ENCODE measurements at regions of chr7 and their contacts with region 1.

Region 1: DNA sequence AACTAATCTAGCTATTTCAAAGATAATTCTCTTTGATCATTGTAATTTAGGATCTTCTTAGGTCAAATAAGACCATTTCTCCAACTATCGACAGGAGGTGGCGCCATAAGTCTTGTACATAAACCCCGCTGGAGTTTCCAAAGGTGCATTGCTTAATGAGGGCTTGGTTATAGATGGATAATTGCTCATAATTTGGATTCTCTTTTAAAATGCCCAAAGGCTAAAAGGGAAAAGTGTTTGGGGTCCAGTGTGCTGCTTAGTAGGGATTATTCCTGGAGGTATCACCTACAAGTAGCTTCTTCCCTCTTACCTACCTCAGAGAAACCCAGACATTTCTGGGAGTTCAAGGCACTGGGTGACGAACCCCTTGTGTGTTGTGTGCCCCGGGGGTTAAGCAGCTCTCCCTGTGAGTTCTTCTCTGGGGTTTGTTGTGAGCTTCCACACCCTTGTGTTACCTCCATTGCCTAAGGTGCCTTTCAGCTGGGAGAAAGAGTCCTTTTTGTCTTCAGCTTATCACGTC is 75.2 kb downstream of the PAXIP1 start:
- DNase-seq: peak in 3 of 4 donors; percentile 69 to 88 (median 71)
- ATAC-seq: peak; percentile 91
- H3K4me3 ChIP-seq: peak overlapping the region; percentile 61 to 64
- H3K27ac ChIP-seq: peak overlapping the region; percentile 85 to 91
- H3K4me1 ChIP-seq: peaks cover 4 to 8% of the 10 kb centered on the region in 2 donors
- H3K27me3 ChIP-seq: no peaks in the 10 kb centered on the region
- CTCF ChIP-seq: peak; percentile 55 to 62

Region 2: DNA sequence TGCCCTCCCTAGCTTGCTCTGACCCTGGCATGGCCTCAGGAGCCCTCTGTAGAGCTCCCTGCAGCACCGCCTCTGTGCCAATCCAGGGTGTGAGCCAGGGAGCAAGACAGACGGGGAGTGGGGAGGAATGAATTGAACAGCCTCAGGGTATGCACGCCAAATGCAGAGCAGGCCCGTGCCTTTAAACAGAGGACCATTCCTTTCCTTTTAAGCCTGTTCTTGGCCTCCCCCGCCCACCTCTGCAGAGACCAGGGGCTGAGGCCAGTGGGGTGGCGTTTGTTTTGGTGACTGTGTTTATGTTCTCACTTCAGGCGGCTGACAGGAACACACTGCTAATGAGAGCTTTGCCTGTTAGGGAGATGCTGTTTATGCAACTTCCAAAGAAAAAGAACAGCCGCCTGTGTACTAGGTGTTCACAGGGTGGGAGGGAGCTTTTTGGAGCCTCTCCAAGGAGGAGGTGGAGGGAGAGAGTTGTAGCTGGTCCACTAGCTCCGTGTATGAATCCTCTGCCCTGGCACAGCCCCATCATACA is 1403.5 kb before region 1 on chr7:
- intact Hi-C with region 1: no loop called
- DNase-seq: no peak
- ATAC-seq: no peak
- H3K4me3 ChIP-seq: no peak overlapping the region
- H3K27ac ChIP-seq: no peak overlapping the region
- H3K4me1 ChIP-seq: no peaks in the 10 kb centered on the region
- H3K27me3 ChIP-seq: no peaks in the 10 kb centered on the region
- CTCF ChIP-seq: no peak

Region 3: GRCh38 chr7:155003376-155004214 is 75.9 kb after region 1 on chr7:
- intact Hi-C with region 1: loop called in 1 of 2 experiments (anchors 10 kb)
- DNase-seq: peak; percentile 83 to 93 (median 90)
- ATAC-seq: peak; percentile 97
- H3K4me3 ChIP-seq: peak overlapping the region; percentile 80 to 95
- H3K27ac ChIP-seq: peak overlapping the region; percentile 86 to 89
- H3K4me1 ChIP-seq: peaks cover 0 to 33% of the 10 kb centered on the region in 2 donors
- H3K27me3 ChIP-seq: no peaks in the 10 kb centered on the region
- CTCF ChIP-seq: no peak

Measured in left lung (tissue), 14 donors.